Endothelial cell of umbilical vein (primary cell): ENCODE measurements at regions of chr11 and their contacts with region 1.

Region 1: DNA sequence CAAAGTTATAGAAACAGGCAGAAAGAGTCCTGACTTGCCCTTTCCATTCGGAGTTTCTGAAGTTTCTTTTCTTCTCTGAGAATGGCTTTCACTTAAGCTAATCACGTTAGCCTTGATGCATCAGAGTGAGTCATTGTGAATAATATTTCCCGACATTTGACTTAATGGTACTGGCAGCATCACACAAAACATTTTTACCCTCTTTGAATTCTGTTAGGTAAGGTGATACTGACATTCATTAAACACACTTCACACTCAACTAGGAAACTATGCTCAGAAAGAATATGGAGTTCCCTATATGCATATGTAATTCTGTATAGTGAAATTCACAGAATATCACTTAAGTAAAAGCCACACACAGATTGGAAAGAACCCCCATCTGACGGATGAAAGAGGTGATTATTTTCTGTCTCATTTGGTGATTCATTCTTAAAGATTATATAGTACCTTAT is 120.8 kb upstream of the ARHGAP20 start:
- DNase-seq: peak; percentile 84
- H3K4me3 ChIP-seq: no peak overlapping the region
- H3K27ac ChIP-seq: peak overlapping the region; percentile 60
- H3K4me1 ChIP-seq: peaks cover 44% of the 10 kb centered on the region
- H3K27me3 ChIP-seq: no peaks in the 10 kb centered on the region
- CTCF ChIP-seq: no peak
- POLR2A ChIP-seq: no peak

Region 2: GRCh38 chr11:110777775-110778174 is 55.3 kb before region 1 on chr11:
- CTCF ChIA-PET with region 1: no interaction called
- POLR2A ChIA-PET with region 1: no interaction called
- dilution Hi-C with region 1: no loop called
- intact Hi-C with region 1: loop called (anchors 2 kb)
- DNase-seq: peak; percentile 95
- H3K4me3 ChIP-seq: peak overlapping the region in 1 of 3 experiments; percentile 0
- H3K27ac ChIP-seq: peak overlapping the region; percentile 50
- H3K4me1 ChIP-seq: peaks cover 21% of the 10 kb centered on the region
- H3K27me3 ChIP-seq: no peaks in the 10 kb centered on the region
- CTCF ChIP-seq: no peak
- POLR2A ChIP-seq: no peak

Region 3: DNA sequence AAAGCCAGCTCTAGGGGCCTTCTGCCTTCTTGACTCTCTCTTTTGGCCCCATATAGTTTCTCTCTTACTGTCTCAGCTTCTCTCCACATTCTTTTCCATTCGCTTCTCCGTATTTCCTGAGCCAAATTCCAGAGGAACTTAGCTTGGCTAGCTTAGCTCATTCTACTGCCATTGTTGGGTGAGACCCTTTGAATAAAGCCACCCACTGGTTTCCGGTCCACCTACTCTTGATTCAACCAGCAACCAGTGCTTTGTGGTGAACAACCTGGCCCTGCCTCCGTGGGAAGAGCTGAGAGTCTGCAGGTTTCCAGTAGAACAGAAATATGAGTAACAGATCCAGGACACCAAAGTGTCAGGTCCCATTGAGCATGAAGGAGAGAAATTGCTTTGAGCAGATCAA is 39.5 kb before region 1 on chr11:
- CTCF ChIA-PET with region 1: no interaction called
- POLR2A ChIA-PET with region 1: no interaction called
- dilution Hi-C with region 1: no loop called
- intact Hi-C with region 1: loop called (anchors 5 kb)
- DNase-seq: peak; percentile 51
- H3K4me3 ChIP-seq: no peak overlapping the region
- H3K27ac ChIP-seq: no peak overlapping the region
- H3K4me1 ChIP-seq: peaks cover 20% of the 10 kb centered on the region
- H3K27me3 ChIP-seq: no peaks in the 10 kb centered on the region
- CTCF ChIP-seq: no peak
- POLR2A ChIP-seq: no peak